Activated CD4-positive, alpha-beta memory T cell treated with anti-CD3 and anti-CD28 coated beads for 36 hours (primary cell): ENCODE measurements at regions of chr2 and their contacts with region 1.

Region 1: GRCh38 chr2:216680951-216681629 is 14.3 kb downstream of the IGFBP5 start:
- DNase-seq: no peak
- H3K4me3 Mint-ChIP-seq: no peak overlapping the region
- H3K27ac Mint-ChIP-seq: no peak overlapping the region
- H3K4me1 Mint-ChIP-seq: no peaks in the 10 kb centered on the region
- H3K27me3 Mint-ChIP-seq: peaks cover 23% of the 10 kb centered on the region

Region 2: GRCh38 chr2:216936954-216937357 is 255.9 kb after region 1 on chr2:
- CTCF ChIA-PET with region 1: no interaction called
- POLR2A ChIA-PET with region 1: no interaction called
- intact Hi-C with region 1: no loop called
- DNase-seq: no peak
- H3K4me3 Mint-ChIP-seq: no peak overlapping the region
- H3K27ac Mint-ChIP-seq: no peak overlapping the region
- H3K4me1 Mint-ChIP-seq: no peaks in the 10 kb centered on the region
- H3K27me3 Mint-ChIP-seq: peaks cover 5% of the 10 kb centered on the region

Region 3: GRCh38 chr2:217035967-217036366 is 354.9 kb after region 1 on chr2:
- CTCF ChIA-PET with region 1: no interaction called
- POLR2A ChIA-PET with region 1: no interaction called
- intact Hi-C with region 1: no loop called
- DNase-seq: no peak
- H3K4me3 Mint-ChIP-seq: no peak overlapping the region
- H3K27ac Mint-ChIP-seq: no peak overlapping the region
- H3K4me1 Mint-ChIP-seq: no peaks in the 10 kb centered on the region
- H3K27me3 Mint-ChIP-seq: peaks cover 2% of the 10 kb centered on the region

Region 4: DNA sequence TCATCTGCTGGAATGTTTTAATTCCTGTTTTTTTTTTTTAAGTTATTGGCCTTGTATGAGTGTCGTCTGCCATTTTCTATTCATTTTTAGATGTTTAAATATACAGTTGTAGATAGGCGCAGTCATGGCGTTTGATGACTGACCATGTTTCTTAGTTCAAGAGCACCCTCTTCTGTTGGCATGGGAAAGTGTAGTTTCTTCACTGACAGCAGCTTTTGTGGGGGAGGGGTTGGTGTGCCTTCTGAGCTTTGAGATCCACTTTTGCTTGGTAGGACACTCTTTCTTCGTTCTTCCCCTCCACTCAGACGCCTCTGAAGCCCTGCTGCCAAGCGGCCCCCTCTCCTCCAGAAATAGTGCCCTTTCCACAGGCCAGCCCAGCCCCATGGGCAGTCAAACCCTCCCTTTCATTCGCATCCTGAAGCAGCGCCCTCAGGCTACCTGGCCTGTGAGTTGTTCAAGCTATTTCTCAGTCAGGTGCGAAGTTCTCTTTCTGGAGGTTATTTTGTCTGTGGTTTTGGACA is 829.7 kb after region 1 on chr2:
- CTCF ChIA-PET with region 1: interaction called, 3 read pairs
- POLR2A ChIA-PET with region 1: no interaction called
- intact Hi-C with region 1: loop called (anchors 1 kb)
- DNase-seq: peak; percentile 44
- H3K4me3 Mint-ChIP-seq: no peak overlapping the region
- H3K27ac Mint-ChIP-seq: no peak overlapping the region
- H3K4me1 Mint-ChIP-seq: peaks cover 5% of the 10 kb centered on the region
- H3K27me3 Mint-ChIP-seq: no peaks in the 10 kb centered on the region